ENCODE measurements at regions of chr5 and their contacts with region 1.

Region 1: DNA sequence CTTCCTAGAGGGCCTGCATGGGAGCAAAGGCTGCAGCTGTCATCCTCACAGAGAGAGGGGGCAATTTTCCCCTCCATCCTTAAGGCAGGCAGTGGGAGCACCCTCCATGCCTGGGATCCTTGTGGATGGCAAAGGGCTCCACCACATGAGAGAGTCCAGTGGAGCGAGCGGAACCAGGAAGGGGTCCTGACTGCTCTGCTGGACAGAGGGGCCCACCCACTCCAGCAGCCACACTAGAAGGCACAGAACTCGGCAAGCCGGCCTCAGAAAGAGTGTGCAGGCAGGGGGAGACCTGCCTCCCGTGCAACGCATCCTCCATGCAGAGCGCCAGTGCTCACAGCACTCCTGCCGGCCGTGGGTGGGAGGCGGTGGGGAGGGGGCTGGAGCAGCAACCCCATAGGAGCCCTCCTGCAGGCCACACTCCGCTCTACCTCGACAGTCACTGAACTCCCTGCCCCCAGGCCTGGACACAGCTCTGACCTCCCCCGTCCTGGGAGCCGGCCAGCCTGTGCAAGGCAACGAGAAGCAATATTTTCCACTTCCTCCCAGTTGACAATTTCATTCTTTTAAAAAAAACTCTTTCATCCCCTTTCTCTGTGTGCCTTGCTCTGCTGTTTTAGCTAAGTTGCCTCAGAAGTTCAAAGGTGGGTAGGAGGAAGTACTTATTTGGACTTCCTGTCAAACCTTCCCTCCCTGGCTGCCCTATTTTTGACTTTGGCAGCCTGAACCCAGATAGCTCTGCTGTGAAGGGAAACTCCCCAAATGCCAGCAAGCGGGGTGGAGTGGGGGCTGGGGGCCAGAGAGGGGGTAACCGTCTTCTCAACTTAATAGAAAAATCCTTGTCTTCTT is 5.3 kb upstream of the LCP2 start:
- DNase-seq: peak; percentile 72
- H3K4me3 Mint-ChIP-seq: peak overlapping the region; percentile 54
- H3K27ac Mint-ChIP-seq: peak overlapping the region; percentile 84
- H3K4me1 Mint-ChIP-seq: peaks cover 72% of the 10 kb centered on the region
- H3K27me3 Mint-ChIP-seq: no peaks in the 10 kb centered on the region

Region 2: GRCh38 chr5:170159101-170159698 is 143.7 kb before region 1 on chr5:
- CTCF ChIA-PET with region 1: no interaction called
- POLR2A ChIA-PET with region 1: no interaction called
- DNase-seq: no peak
- H3K4me3 Mint-ChIP-seq: no peak overlapping the region
- H3K27ac Mint-ChIP-seq: no peak overlapping the region
- H3K4me1 Mint-ChIP-seq: no peaks in the 10 kb centered on the region
- H3K27me3 Mint-ChIP-seq: peaks cover 5% of the 10 kb centered on the region

Region 3: GRCh38 chr5:170278611-170279452 is 24.0 kb before region 1 on chr5:
- CTCF ChIA-PET with region 1: interaction called, 371 read pairs
- POLR2A ChIA-PET with region 1: interaction called, 1,149 read pairs
- DNase-seq: peak; percentile 94
- H3K4me3 Mint-ChIP-seq: peak overlapping the region; percentile 69
- H3K27ac Mint-ChIP-seq: peak overlapping the region; percentile 97
- H3K4me1 Mint-ChIP-seq: peaks cover 97% of the 10 kb centered on the region
- H3K27me3 Mint-ChIP-seq: no peaks in the 10 kb centered on the region